Activated CD4-positive, alpha-beta T cell treated with anti-CD3 and anti-CD28 coated beads for 36 hours (primary cell): ENCODE measurements at regions of chr18 and their contacts with region 1.

Region 1: DNA sequence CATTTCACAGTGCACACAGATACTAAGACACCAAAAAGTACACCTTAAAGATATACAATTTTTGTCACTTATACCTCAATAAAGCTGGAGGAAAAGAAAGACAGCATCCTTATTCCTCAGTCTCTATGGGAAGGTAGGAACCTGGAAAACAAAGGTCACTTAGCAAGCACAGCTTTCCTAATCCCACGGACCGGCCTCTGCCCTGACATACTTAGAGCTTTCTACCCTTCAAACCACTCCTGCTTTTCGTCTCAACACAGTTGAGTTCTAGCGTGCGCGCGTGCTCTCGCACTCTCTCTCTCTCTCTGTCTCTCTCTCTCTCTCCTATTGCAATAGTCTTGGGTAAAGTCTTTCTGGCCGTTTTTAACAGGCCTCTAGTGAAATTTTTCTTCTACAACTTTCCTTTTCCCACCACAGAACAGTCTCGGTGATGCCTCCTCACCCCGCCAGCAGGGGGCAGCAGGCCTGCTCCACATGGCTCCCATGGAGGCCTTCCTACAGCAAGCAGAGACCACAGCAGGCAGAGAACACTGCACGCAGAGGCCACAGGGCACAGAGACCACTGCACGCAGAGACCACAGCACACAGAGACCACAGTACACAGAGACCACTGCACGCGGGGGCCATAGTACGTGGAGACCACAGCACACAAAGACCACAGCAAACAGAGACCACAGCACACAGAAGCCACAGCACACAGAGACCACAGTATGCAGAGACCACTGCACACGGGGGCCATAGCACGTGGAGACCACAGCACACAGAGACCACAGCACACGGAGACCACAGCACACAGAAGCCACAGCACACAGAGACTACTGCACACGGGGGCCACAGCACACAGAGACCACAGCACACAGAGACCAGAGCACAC is 106.9 kb downstream of the FBXO15 start:
- DNase-seq: peak; percentile 86
- ATAC-seq: peak; percentile 98
- H3K4me3 Mint-ChIP-seq: no peak overlapping the region
- H3K27ac Mint-ChIP-seq: no peak overlapping the region
- H3K4me1 Mint-ChIP-seq: no peaks in the 10 kb centered on the region
- H3K27me3 Mint-ChIP-seq: no peaks in the 10 kb centered on the region

Region 2: GRCh38 chr18:74097598-74098202 is 57.0 kb after region 1 on chr18:
- CTCF ChIA-PET with region 1: no interaction called
- POLR2A ChIA-PET with region 1: no interaction called
- intact Hi-C with region 1: no loop called
- DNase-seq: no peak
- ATAC-seq: no peak
- H3K4me3 Mint-ChIP-seq: no peak overlapping the region
- H3K27ac Mint-ChIP-seq: no peak overlapping the region
- H3K4me1 Mint-ChIP-seq: no peaks in the 10 kb centered on the region
- H3K27me3 Mint-ChIP-seq: peaks cover 1% of the 10 kb centered on the region

Region 3: DNA sequence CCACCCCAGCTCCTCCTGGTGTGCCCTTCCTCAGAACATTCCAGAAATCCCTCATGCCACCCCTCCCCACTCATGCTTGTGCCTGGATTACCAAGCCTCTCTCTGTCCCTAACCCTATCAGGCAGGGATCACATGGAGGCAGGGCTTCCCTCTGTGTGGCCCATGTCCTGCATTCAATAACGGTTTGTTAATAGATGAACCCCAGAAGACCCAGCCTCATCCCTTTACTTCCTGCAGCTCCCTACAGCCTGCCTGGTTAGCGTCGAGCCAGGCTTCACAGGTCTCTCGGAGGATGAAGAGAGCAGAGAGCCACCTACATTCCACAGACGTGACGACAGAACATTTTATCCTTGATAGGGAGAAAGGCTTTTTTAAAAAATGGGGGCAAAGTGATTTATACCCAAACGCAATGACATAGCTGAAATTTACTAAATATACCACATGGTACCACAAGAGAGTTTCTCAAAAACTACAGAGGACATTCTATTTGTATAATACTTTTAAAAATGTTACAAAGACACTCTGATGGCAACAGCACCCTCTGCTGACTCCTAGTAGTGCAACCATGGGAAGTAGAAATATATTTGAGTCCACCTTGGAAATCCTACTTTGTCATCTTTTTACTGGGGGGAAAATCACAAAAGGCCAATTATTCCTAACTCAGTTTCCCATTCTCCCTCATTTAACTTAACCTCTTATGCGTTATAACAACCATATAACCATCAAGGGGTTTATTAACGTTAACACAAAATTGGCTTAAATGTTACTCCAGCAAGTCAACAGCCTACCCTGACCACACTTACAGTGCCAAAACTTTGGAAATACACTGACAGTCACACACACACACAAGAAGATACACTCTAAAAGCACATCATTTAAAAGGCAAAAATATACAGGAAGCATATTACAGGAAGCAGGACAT is 76.2 kb after region 1 on chr18:
- CTCF ChIA-PET with region 1: interaction called, 5 read pairs
- POLR2A ChIA-PET with region 1: no interaction called
- intact Hi-C with region 1: loop called (anchors 1 kb)
- DNase-seq: peak; percentile 55
- ATAC-seq: peak; percentile 70
- H3K4me3 Mint-ChIP-seq: no peak overlapping the region
- H3K27ac Mint-ChIP-seq: no peak overlapping the region
- H3K4me1 Mint-ChIP-seq: peaks cover 11% of the 10 kb centered on the region
- H3K27me3 Mint-ChIP-seq: no peaks in the 10 kb centered on the region

Region 4: GRCh38 chr18:74139888-74140287 is 99.2 kb after region 1 on chr18:
- CTCF ChIA-PET with region 1: interaction called, 3 read pairs
- POLR2A ChIA-PET with region 1: no interaction called
- intact Hi-C with region 1: loop called in 1 of 2 experiments (anchors 5 kb)
- DNase-seq: peak; percentile 70
- ATAC-seq: peak; percentile 95
- H3K4me3 Mint-ChIP-seq: peak overlapping the region; percentile 50
- H3K27ac Mint-ChIP-seq: peak overlapping the region; percentile 92
- H3K4me1 Mint-ChIP-seq: peaks cover 39% of the 10 kb centered on the region
- H3K27me3 Mint-ChIP-seq: peaks cover 10% of the 10 kb centered on the region